ENCODE measurements at regions of chr12 and their contacts with region 1.

Region 1: GRCh38 chr12:70590051-70590450 is 47.2 kb downstream of the PTPRB start:
- DNase-seq: peak in 2 of 3 donors; percentile 73 to 84
- ATAC-seq: peak; percentile 78
- H3K4me3 ChIP-seq: no peak overlapping the region
- H3K4me1 ChIP-seq: no peaks in the 10 kb centered on the region
- CTCF ChIP-seq: peak; percentile 54

Region 2: GRCh38 chr12:70719672-70720420 is 129.8 kb after region 1 on chr12:
- intact Hi-C with region 1: loop called in 1 of 2 experiments (anchors 5 kb)
- DNase-seq: peak in 2 of 3 donors; percentile 41 to 44
- ATAC-seq: peak; percentile 49
- H3K4me3 ChIP-seq: no peak overlapping the region
- H3K4me1 ChIP-seq: no peaks in the 10 kb centered on the region
- CTCF ChIP-seq: peak; percentile 74

Region 3: GRCh38 chr12:71303199-71303598 is 713.1 kb after region 1 on chr12:
- intact Hi-C with region 1: no loop called
- DNase-seq: no peak
- ATAC-seq: no peak
- H3K4me3 ChIP-seq: no peak overlapping the region
- H3K4me1 ChIP-seq: no peaks in the 10 kb centered on the region
- CTCF ChIP-seq: no peak

Measured in mucosa of descending colon (tissue), 3 donors.